ENCODE measurements at regions of chr7 and their contacts with region 1.

Region 1: GRCh38 chr7:21767300-21767900 is 178.3 kb downstream of the CDCA7L start:
- DNase-seq: peak; percentile 71
- H3K4me3 ChIP-seq: no peak overlapping the region
- H3K27ac ChIP-seq: no peak overlapping the region
- H3K4me1 ChIP-seq: no peaks in the 10 kb centered on the region
- H3K27me3 ChIP-seq: no peaks in the 10 kb centered on the region
- CTCF ChIP-seq: peak; percentile 82 to 91

Region 2: DNA sequence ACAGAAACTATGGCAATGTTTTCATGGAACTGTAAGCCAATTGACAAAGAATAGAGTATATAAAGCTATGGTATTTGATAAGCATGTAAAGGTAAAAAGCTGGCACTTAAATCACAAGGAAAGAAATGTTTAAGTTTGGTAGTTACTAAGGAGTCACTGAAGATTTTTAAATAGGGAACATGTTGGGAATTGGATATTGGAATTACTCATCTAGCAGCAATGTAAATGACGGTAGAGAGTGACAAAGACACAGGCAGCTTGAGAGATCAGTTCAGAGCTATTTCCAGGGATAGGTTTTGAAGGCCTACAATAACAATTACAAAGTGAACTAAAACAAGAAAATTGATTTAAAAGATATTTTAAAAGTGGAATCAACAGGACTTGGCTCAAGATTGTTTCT is 1017.5 kb before region 1 on chr7:
- CTCF ChIA-PET with region 1: no interaction called
- dilution Hi-C with region 1: no loop called
- in situ Hi-C with region 1: loop called in 1 of 2 experiments (anchors 25 kb)
- intact Hi-C with region 1: no loop called
- DNase-seq: peak; percentile 9
- H3K4me3 ChIP-seq: no peak overlapping the region
- H3K27ac ChIP-seq: no peak overlapping the region
- H3K4me1 ChIP-seq: no peaks in the 10 kb centered on the region
- H3K27me3 ChIP-seq: no peaks in the 10 kb centered on the region
- CTCF ChIP-seq: no peak

Region 3: GRCh38 chr7:20932785-20933461 is 834.5 kb before region 1 on chr7:
- CTCF ChIA-PET with region 1: no interaction called
- dilution Hi-C with region 1: no loop called
- in situ Hi-C with region 1: no loop called
- intact Hi-C with region 1: no loop called
- DNase-seq: peak; percentile 40
- H3K4me3 ChIP-seq: no peak overlapping the region
- H3K27ac ChIP-seq: no peak overlapping the region
- H3K4me1 ChIP-seq: no peaks in the 10 kb centered on the region
- H3K27me3 ChIP-seq: no peaks in the 10 kb centered on the region
- CTCF ChIP-seq: no peak

Region 4: GRCh38 chr7:20991544-20991943 is 775.9 kb before region 1 on chr7:
- CTCF ChIA-PET with region 1: no interaction called
- dilution Hi-C with region 1: no loop called
- in situ Hi-C with region 1: no loop called
- intact Hi-C with region 1: loop called (anchors 1 kb)
- DNase-seq: peak; percentile 9
- H3K4me3 ChIP-seq: no peak overlapping the region
- H3K27ac ChIP-seq: no peak overlapping the region
- H3K4me1 ChIP-seq: no peaks in the 10 kb centered on the region
- H3K27me3 ChIP-seq: no peaks in the 10 kb centered on the region
- CTCF ChIP-seq: peak; percentile 37 to 67

Region 5: DNA sequence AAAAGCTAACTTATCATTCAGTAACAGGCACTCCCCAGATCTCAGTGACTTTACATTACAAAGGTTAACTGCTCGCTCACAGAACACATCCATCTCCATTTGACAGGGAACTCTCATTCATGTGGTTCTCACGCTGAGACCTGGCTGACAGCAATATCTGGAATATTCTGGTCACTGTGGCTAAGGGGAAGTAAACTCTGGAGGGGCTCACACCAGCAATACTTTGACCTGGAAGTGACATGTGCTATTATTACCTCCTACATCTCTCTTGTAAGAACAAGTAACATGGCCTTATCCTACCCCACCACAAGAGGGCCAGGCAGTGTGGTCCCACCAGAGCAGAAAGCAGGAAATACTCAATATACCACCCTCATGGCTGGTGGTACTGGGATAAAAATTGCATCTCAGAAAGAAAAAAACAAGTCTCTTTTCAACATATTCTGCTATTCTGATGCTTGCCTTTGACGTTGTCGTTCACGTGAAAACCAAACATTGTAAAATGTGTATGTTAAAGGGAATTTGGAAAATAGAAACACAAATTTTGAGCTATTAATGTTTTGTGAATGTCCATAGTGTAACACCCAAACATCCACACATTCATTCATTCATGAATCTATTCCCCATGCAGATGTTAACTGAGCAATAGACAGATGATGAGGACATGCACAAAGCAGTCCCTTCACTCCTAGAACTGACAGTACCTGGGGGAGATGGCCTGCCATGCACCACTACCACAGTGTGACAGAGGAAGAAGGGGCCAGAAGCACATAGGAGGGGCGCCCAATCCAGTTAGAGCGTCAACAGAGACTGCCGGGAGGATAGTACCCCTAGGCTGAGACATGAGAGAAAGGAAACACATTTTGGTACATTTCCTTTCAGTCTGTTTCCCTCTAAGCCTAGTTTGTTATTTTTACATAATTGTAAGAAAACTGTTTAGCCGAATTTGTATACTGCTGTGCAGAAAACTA is 505.5 kb before region 1 on chr7:
- CTCF ChIA-PET with region 1: no interaction called
- dilution Hi-C with region 1: no loop called
- in situ Hi-C with region 1: loop called in 1 of 2 experiments (anchors 10 kb)
- intact Hi-C with region 1: loop called (anchors 1 kb)
- DNase-seq: peak; percentile 14
- H3K4me3 ChIP-seq: no peak overlapping the region
- H3K27ac ChIP-seq: no peak overlapping the region
- H3K4me1 ChIP-seq: no peaks in the 10 kb centered on the region
- H3K27me3 ChIP-seq: peaks cover 2% of the 10 kb centered on the region
- CTCF ChIP-seq: peak; percentile 67 to 69

Region 6: DNA sequence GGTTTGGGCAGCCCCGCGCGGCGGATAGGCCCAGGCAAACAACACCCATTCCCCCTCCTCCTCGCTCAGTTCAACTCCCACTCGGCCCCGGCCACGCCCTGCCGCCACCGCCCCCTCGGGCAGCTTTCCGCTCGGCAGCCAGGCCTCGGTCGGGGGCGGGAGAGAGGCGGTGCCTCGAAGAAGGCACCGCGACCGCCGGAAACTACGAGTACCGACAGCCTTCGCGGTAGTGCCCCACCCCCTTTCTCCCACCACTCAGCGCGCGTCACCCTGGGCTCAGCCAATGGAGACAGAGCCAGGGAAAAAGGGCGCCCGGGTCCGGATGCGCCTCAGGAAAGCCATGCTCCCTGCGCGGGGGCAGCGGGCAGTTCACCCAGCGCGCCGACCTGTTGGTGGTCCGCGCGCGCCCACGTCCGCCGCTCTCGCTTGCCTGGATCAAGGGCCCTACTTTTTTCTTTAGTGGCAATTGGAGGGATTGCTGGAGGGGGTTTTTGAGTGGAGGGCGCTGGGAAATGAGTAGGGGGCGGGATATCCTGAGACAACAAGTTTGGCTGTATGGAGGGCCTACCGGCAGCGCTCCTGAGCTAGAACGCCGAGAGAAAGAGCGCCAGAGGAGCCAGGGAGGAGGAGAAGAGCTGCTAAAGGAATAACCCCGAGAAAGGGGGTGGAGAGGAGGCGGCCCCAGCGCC is 340.1 kb before region 1 on chr7:
- CTCF ChIA-PET with region 1: no interaction called
- dilution Hi-C with region 1: no loop called
- in situ Hi-C with region 1: no loop called
- intact Hi-C with region 1: loop called (anchors 10 kb)
- DNase-seq: peak; percentile 99
- H3K4me3 ChIP-seq: peak overlapping the region; percentile 67 to 99 (median 69)
- H3K27ac ChIP-seq: peak overlapping the region; percentile 96
- H3K4me1 ChIP-seq: peaks cover 9% of the 10 kb centered on the region
- H3K27me3 ChIP-seq: no peaks in the 10 kb centered on the region
- CTCF ChIP-seq: no peak

Region 7: DNA sequence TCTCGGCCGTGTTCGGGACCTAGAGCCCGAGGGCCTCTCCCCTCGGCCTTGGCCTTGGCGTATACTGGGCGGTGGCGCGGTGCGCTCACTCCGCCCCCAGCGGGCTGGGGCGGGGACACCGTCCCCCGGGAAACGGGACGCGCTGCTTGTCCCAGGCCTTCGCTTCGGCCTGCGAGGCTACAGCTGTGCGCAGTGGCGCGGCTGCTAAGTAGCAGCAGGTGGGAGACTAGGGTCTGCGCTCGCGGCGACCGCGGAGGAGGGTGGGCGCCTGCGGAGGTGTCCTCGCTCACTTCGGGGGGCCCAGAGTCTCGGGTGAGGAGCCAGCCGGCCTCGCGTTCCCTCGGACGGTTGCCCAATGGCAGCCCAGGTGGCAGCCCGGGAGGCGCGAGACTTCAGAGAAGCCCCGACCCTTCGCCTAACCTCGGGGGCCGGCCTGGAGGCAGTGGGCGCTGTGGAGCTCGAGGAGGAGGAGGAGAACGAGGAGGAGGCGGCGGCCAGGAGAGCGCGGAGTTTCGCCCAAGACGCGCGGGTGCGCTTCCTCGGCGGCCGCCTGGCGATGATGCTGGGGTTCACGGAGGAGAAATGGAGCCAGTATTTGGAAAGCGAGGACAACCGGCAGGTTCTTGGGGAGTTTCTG is 224.4 kb before region 1 on chr7 and contains the start of gene DNAH11:
- CTCF ChIA-PET with region 1: no interaction called
- dilution Hi-C with region 1: no loop called
- in situ Hi-C with region 1: no loop called
- intact Hi-C with region 1: loop called (anchors 10 kb)
- DNase-seq: peak; percentile 38
- H3K4me3 ChIP-seq: peak within 1 kb of the TSS; percentile 40 to 58 (median 45)
- H3K27ac ChIP-seq: no peak within 1 kb of the TSS
- H3K4me1 ChIP-seq: peaks cover 15% of the 10 kb centered on the region
- H3K27me3 ChIP-seq: peaks cover 17% of the 10 kb centered on the region
- CTCF ChIP-seq: no peak
- total RNA-seq, gene DNAH11: 0.17 TPM in 1 of 2 donors, not detected in the other

Region 8: DNA sequence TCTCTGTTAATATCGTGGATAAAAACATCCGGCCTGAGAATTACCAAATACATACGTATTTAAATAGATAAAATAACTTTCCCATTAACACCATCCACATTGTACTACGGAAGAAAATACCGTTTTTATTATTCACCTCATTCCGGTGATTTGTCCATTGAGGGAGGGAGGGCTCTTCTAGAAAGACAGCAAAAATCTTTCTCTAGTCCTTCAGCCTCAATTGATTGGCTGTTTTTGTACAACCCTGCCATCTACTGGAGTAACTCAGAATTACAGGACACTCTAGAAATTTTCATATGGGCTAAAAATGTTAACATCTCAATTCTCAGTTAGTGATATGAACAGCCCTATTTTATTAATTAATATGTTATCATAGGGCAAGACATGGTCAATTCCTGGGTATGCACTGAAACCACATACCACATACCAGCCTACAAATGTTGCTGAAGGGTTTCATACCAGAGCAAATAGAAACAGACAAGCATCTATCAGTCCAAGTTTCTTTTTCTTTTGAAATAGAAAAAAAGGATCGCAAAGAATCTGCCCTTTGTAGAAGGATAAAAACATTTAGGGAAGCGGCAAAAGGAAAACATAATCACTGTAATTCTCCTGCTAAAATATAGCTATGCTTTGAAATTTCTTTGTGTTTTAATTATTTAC is 234.1 kb after region 1 on chr7:
- CTCF ChIA-PET with region 1: no interaction called
- dilution Hi-C with region 1: no loop called
- in situ Hi-C with region 1: loop called in 1 of 2 experiments (anchors 25 kb)
- intact Hi-C with region 1: loop called (anchors 1 kb)
- DNase-seq: peak; percentile 71
- H3K4me3 ChIP-seq: peak overlapping the region in 1 of 3 experiments; percentile 22
- H3K27ac ChIP-seq: peak overlapping the region; percentile 57
- H3K4me1 ChIP-seq: peaks cover 14% of the 10 kb centered on the region
- H3K27me3 ChIP-seq: no peaks in the 10 kb centered on the region
- CTCF ChIP-seq: peak; percentile 54 to 70

Measured in mammary epithelial cell (primary cell).